Mammary epithelial cell (primary cell): ENCODE measurements at regions of chr14 and their contacts with region 1.

Region 1: GRCh38 chr14:78933948-78934524 is 763.9 kb downstream of the NRXN3 start:
- DNase-seq: peak; percentile 8
- H3K4me3 ChIP-seq: no peak overlapping the region
- H3K27ac ChIP-seq: no peak overlapping the region
- H3K4me1 ChIP-seq: no peaks in the 10 kb centered on the region
- H3K27me3 ChIP-seq: no peaks in the 10 kb centered on the region
- CTCF ChIP-seq: peak; percentile 25 to 51

Region 2: GRCh38 chr14:78840898-78841297 is 93.1 kb before region 1 on chr14:
- CTCF ChIA-PET with region 1: no interaction called
- dilution Hi-C with region 1: no loop called
- in situ Hi-C with region 1: no loop called
- intact Hi-C with region 1: no loop called
- DNase-seq: no peak
- H3K4me3 ChIP-seq: no peak overlapping the region
- H3K27ac ChIP-seq: no peak overlapping the region
- H3K4me1 ChIP-seq: no peaks in the 10 kb centered on the region
- H3K27me3 ChIP-seq: no peaks in the 10 kb centered on the region
- CTCF ChIP-seq: no peak

Region 3: DNA sequence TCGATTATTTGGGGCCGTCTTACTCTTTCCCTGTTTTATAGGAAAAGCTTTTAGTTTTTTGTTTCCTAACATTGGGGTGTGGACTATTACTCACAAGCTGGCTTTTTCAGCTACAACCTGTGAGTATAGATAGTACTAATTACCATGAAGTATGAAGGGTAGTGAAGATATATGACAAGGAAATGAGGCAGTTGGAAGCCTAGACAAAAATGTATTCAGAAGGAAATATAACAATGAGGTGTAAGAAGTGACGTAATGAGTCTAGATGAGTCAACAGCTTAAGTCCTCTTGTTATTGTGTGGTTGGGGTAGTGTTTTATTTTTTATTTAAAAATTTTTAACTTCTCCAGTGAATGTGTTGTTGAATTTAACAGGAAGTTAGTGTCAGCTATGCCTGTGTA is 40.7 kb after region 1 on chr14:
- CTCF ChIA-PET with region 1: interaction called, 23 read pairs
- dilution Hi-C with region 1: no loop called
- in situ Hi-C with region 1: no loop called
- intact Hi-C with region 1: no loop called
- DNase-seq: peak; percentile 17
- H3K4me3 ChIP-seq: no peak overlapping the region
- H3K27ac ChIP-seq: no peak overlapping the region
- H3K4me1 ChIP-seq: no peaks in the 10 kb centered on the region
- H3K27me3 ChIP-seq: no peaks in the 10 kb centered on the region
- CTCF ChIP-seq: no peak

Region 4: DNA sequence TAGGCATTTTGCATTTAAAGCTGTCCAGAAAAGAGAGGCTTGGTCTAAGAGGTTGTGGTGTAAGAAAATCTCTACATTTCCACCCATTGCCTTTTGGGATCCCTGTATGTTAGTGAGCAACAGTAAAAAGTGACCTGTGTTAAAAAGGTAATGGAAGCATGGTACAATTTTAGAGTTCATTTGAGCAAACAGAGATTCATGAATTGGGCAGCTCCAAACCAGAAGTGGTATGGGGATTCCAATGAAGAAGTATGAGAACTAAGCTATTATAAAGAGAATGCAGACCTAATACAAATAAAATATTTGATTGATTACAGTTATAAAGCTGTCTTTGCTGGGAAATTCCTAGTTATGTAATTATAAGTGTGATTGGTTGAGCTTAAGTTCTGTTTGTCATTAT is 370.2 kb after region 1 on chr14:
- CTCF ChIA-PET with region 1: interaction called, 23 read pairs
- dilution Hi-C with region 1: no loop called
- in situ Hi-C with region 1: no loop called
- intact Hi-C with region 1: no loop called
- DNase-seq: no peak
- H3K4me3 ChIP-seq: no peak overlapping the region
- H3K27ac ChIP-seq: no peak overlapping the region
- H3K4me1 ChIP-seq: no peaks in the 10 kb centered on the region
- H3K27me3 ChIP-seq: no peaks in the 10 kb centered on the region
- CTCF ChIP-seq: no peak